ENCODE measurements at regions of chr19 and their contacts with region 1.

Region 1: GRCh38 chr19:40465557-40466150 is at the start of gene BLVRB:
- DNase-seq: peak; percentile 99
- H3K4me3 ChIP-seq: peak within 1 kb of the TSS; percentile 74 to 83 (median 80)
- H3K27ac ChIP-seq: peak within 1 kb of the TSS; percentile 75
- H3K4me1 ChIP-seq: peaks cover 26% of the 10 kb centered on the region
- H3K27me3 ChIP-seq: no peaks in the 10 kb centered on the region
- CTCF ChIP-seq: no peak
- total RNA-seq, gene BLVRB: 57.6 to 92.5 TPM

Region 2: GRCh38 chr19:40381321-40381720 is 84.3 kb before region 1 on chr19:
- CTCF ChIA-PET with region 1: no interaction called
- dilution Hi-C with region 1: no loop called
- in situ Hi-C with region 1: no loop called
- intact Hi-C with region 1: no loop called
- DNase-seq: no peak
- H3K4me3 ChIP-seq: no peak overlapping the region
- H3K27ac ChIP-seq: no peak overlapping the region
- H3K4me1 ChIP-seq: no peaks in the 10 kb centered on the region
- H3K27me3 ChIP-seq: no peaks in the 10 kb centered on the region
- CTCF ChIP-seq: no peak

Region 3: GRCh38 chr19:40416918-40417642 is 48.6 kb before region 1 on chr19:
- CTCF ChIA-PET with region 1: interaction called, 6 read pairs
- dilution Hi-C with region 1: loop called (anchors 5 kb)
- in situ Hi-C with region 1: no loop called
- intact Hi-C with region 1: loop called (anchors 1 kb)
- DNase-seq: peak; percentile 55
- H3K4me3 ChIP-seq: no peak overlapping the region
- H3K27ac ChIP-seq: no peak overlapping the region
- H3K4me1 ChIP-seq: peaks cover 31% of the 10 kb centered on the region
- H3K27me3 ChIP-seq: no peaks in the 10 kb centered on the region
- CTCF ChIP-seq: no peak

Region 4: DNA sequence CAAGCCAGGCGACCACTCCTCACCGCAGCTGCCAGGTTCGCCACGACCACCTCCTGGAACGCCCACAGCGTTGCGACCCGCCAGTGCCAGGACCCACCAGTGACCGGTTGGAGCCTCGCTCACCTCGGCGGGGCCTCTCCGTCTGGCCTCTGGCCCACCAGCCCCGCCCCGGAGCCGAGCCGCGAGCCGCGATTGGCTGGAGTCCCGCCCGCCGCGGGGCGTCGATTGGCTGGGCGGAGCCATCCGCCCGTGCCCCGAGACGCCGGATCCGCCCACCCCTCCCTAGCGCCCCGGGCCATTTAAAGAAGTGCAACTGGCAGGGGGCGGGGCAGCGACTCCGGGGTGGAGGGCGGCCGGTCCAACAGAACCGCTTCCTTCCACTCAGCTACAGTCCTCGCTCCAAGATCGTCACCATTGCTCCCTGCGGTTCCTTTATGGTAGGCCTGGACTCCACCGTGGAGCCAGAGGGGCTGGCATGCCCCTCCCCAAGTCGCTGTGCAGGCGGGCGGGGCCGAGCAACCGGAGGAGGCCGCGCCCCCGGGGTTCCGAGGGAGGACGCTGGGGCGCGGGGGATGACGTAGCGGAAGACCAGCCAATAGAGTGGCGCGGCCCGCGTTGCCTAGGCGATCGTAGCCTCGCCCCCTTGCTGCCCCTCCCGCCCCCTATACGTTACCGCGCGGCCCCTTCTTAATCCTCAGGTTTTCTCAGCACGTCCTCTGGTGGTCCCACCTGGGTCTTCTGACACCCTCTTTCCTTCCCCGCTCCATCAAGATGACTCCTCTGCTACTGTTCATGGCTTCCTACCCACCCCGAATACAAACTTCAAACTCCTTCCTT is 21.2 kb before region 1 on chr19 and contains the start of gene SERTAD3:
- CTCF ChIA-PET with region 1: interaction called, 14 read pairs
- dilution Hi-C with region 1: no loop called
- in situ Hi-C with region 1: no loop called
- intact Hi-C with region 1: loop called (anchors 1 kb)
- DNase-seq: peak; percentile 94
- H3K4me3 ChIP-seq: peak within 1 kb of the TSS; percentile 92 to 100 (median 95)
- H3K27ac ChIP-seq: peak within 1 kb of the TSS; percentile 95
- H3K4me1 ChIP-seq: peaks cover 35% of the 10 kb centered on the region
- H3K27me3 ChIP-seq: no peaks in the 10 kb centered on the region
- CTCF ChIP-seq: peak in 1 of 2 donors; percentile 7
- total RNA-seq, gene SERTAD3: 34.3 to 35.8 TPM

Region 5: GRCh38 chr19:40553885-40554857 is 88.5 kb after region 1 on chr19:
- CTCF ChIA-PET with region 1: no interaction called
- dilution Hi-C with region 1: loop called (anchors 5 kb)
- in situ Hi-C with region 1: no loop called
- intact Hi-C with region 1: no loop called
- DNase-seq: peak; percentile 12
- H3K4me3 ChIP-seq: no peak overlapping the region
- H3K27ac ChIP-seq: no peak overlapping the region
- H3K4me1 ChIP-seq: no peaks in the 10 kb centered on the region
- H3K27me3 ChIP-seq: peaks cover 2% of the 10 kb centered on the region
- CTCF ChIP-seq: no peak

Region 6: GRCh38 chr19:40609561-40610395 is 144.1 kb after region 1 on chr19:
- CTCF ChIA-PET with region 1: no interaction called
- dilution Hi-C with region 1: loop called (anchors 5 kb)
- in situ Hi-C with region 1: no loop called
- intact Hi-C with region 1: no loop called
- DNase-seq: peak; percentile 92
- H3K4me3 ChIP-seq: peak overlapping the region; percentile 49 to 63 (median 63)
- H3K27ac ChIP-seq: peak overlapping the region; percentile 74
- H3K4me1 ChIP-seq: peaks cover 63% of the 10 kb centered on the region
- H3K27me3 ChIP-seq: no peaks in the 10 kb centered on the region
- CTCF ChIP-seq: no peak

Measured in mammary epithelial cell (primary cell).